GM12878 (cell line): ENCODE measurements at regions of chr7 and their contacts with region 1.

Region 1: DNA sequence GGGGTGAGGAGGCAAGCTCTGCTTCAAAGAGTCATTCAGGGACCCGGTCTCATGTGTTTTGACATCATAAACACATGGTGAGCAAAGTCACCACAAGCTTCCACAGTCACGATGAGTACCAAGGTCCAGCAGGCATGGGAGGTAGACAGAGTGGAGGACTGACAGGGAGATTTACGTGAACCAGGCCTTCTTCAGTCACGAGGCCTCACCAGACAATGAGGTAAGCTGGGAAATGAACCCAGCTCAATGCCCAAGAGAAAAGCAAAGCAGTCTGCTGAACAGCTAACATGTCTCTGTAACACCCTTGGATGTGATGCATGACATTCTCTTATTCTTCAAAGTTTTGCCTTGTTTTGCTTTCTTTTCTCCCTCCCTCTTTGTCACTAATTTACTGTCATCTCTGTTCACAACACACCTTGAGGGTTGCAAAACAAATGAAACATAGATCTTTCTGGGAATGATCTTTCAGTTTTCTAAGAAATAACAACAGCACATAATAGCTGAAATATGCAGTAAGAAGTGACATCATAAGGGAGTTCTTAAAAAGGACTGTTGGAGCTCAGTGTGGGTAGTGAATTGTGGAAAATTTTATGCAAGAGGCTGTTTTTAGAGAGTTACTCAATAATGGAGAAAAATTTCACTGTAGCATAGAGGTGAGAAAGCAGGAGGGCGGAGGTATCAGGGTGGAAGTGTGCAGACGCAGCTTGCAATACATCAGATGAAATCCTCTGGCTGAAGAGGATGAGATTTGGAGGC is 9.0 kb downstream of the PPP1R17 start:
- DNase-seq: no peak
- ATAC-seq: peak; percentile 81
- H3K4me3 ChIP-seq: no peak overlapping the region
- H3K27ac ChIP-seq: no peak overlapping the region
- H3K4me1 ChIP-seq: no peaks in the 10 kb centered on the region
- H3K27me3 ChIP-seq: no peaks in the 10 kb centered on the region; a peak in 3 of 4 replicates
- CTCF ChIP-seq: no peak
- EP300 ChIP-seq: no peak
- POLR2A ChIP-seq: no peak
- RAD21 ChIP-seq: no peak

Region 2: DNA sequence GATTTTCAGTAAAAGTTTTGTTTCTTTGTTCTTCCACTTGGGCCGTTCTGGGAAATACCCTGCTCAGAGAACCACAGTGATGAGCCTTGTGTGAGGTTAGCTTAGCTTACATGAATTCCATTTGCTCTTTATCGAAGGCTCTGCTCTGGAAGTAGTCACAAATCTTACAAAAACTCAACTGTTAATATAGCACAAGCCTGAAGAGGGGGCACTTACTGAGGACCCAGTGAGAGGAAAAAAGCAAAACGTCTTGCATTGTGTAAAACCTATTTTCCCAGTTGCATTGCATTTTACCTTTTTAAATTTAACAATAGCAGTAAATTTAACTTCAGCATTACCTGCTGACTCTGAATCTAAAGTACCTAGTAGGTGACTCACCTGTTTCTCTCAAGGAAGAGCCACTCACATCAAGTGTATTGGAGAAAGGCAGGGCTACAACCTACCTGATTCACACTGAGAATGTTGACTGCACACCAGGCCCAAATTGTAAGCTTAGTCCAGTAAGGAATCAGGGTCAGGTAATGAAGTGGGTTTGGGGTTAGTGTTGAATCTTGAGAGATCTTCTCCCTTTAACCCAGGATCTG is 33.3 kb after region 1 on chr7:
- CTCF ChIA-PET with region 1: interaction called, 13 read pairs
- POLR2A ChIA-PET with region 1: no interaction called
- RAD21 ChIA-PET with region 1: interaction called, 5 read pairs
- SMC1A ChIA-PET with region 1: interaction called, 14 read pairs
- in situ Hi-C with region 1: no loop called
- intact Hi-C with region 1: no loop called
- DNase-seq: no peak
- ATAC-seq: no peak
- H3K4me3 ChIP-seq: no peak overlapping the region
- H3K27ac ChIP-seq: no peak overlapping the region
- H3K4me1 ChIP-seq: no peaks in the 10 kb centered on the region
- H3K27me3 ChIP-seq: no peaks in the 10 kb centered on the region; a peak in 2 of 4 replicates
- CTCF ChIP-seq: no peak
- EP300 ChIP-seq: no peak
- POLR2A ChIP-seq: no peak
- RAD21 ChIP-seq: no peak